ENCODE measurements at regions of chr13 and their contacts with region 1.

Region 1: GRCh38 chr13:103762523-103762922 is 696.3 kb upstream of the SLC10A2 start:
- DNase-seq: no peak
- ATAC-seq: no peak
- H3K4me3 ChIP-seq: no peak overlapping the region
- H3K27ac ChIP-seq: no peak overlapping the region
- H3K4me1 ChIP-seq: no peaks in the 10 kb centered on the region
- H3K27me3 ChIP-seq: no peaks in the 10 kb centered on the region
- CTCF ChIP-seq: peak in 1 of 3 experiments; percentile 10; a peak in 1 of 6 replicates
- EP300 ChIP-seq: no peak
- POLR2A ChIP-seq: no peak
- RAD21 ChIP-seq: no peak

Region 2: GRCh38 chr13:103656311-103656710 is 106.2 kb before region 1 on chr13:
- CTCF ChIA-PET with region 1: no interaction called
- POLR2A ChIA-PET with region 1: no interaction called
- RAD21 ChIA-PET with region 1: no interaction called
- SMC1A ChIA-PET with region 1: no interaction called
- in situ Hi-C with region 1: no loop called
- intact Hi-C with region 1: no loop called
- DNase-seq: no peak
- ATAC-seq: peak; percentile 57
- H3K4me3 ChIP-seq: no peak overlapping the region
- H3K27ac ChIP-seq: no peak overlapping the region
- H3K4me1 ChIP-seq: no peaks in the 10 kb centered on the region
- H3K27me3 ChIP-seq: no peaks in the 10 kb centered on the region
- CTCF ChIP-seq: no peak
- EP300 ChIP-seq: no peak
- POLR2A ChIP-seq: no peak
- RAD21 ChIP-seq: no peak

Region 3: DNA sequence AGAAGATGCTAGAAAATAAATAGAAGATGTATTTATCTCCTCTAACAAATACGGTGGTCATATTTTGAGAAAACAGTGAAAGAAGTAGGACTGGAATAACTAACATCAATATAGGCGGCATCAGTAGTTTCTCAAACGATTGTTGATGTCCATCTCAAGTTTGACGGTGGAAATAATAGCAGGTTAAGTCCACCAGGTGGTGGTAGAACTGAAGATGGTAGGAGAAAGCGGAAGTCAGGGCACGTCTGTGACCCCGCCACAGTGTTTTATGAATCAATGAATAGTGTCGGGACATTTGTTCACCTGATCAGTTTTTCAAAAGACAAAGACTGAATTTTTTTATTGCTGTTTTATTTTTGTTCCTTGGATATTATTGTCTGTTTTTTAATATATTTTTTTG is 10.1 kb after region 1 on chr13:
- CTCF ChIA-PET with region 1: interaction called, 11 read pairs
- POLR2A ChIA-PET with region 1: no interaction called
- RAD21 ChIA-PET with region 1: interaction called, 3 read pairs
- SMC1A ChIA-PET with region 1: no interaction called
- in situ Hi-C with region 1: no loop called
- intact Hi-C with region 1: no loop called
- DNase-seq: no peak
- ATAC-seq: no peak
- H3K4me3 ChIP-seq: no peak overlapping the region
- H3K27ac ChIP-seq: no peak overlapping the region
- H3K4me1 ChIP-seq: no peaks in the 10 kb centered on the region
- H3K27me3 ChIP-seq: no peaks in the 10 kb centered on the region
- CTCF ChIP-seq: 0 out of 6 replicates have a peak, but pooled peaks of 1 of the 3 experiments have one; percentile 12
- EP300 ChIP-seq: no peak
- POLR2A ChIP-seq: no peak
- RAD21 ChIP-seq: peak; percentile 24; the same call in 1 of the 2 replicates

Region 4: DNA sequence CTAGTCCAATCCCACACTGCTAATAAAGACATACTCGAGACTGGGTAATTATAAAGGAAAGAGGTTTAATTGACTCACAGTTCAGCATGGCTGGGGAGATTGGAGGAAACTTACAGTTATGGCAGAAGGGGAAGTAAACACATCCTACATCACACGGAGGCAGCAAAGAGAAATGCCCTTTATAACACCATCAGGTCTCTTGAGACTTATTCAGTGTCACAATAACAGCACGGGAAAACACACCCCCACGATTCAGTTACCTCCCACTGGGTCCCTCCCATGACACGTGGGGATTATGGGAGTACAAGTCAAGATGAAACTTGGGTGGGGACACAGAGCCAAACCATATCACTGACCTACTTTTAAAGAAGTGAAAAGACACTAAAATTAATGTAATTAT is 434.1 kb after region 1 on chr13:
- CTCF ChIA-PET with region 1: no interaction called
- POLR2A ChIA-PET with region 1: no interaction called
- RAD21 ChIA-PET with region 1: no interaction called
- SMC1A ChIA-PET with region 1: no interaction called
- in situ Hi-C with region 1: no loop called
- intact Hi-C with region 1: no loop called
- DNase-seq: no peak
- ATAC-seq: no peak
- H3K4me3 ChIP-seq: no peak overlapping the region
- H3K27ac ChIP-seq: no peak overlapping the region
- H3K4me1 ChIP-seq: no peaks in the 10 kb centered on the region
- H3K27me3 ChIP-seq: no peaks in the 10 kb centered on the region
- CTCF ChIP-seq: no peak
- EP300 ChIP-seq: no peak
- POLR2A ChIP-seq: no peak
- RAD21 ChIP-seq: no peak

Measured in GM12878 (cell line).